ENCODE measurements at regions of chr3 and their contacts with region 1.

Region 1: GRCh38 chr3:122621112-122621511 is 43.7 kb downstream of the PARP15 start:
- DNase-seq: peak; percentile 66
- ATAC-seq: peak; percentile 63
- H3K4me3 ChIP-seq: peak overlapping the region; percentile 39; the same call in 1 of the 2 replicates
- H3K27ac ChIP-seq: peak overlapping the region; percentile 47; the same call in 1 of the 2 replicates
- H3K4me1 ChIP-seq: peaks cover 24% of the 10 kb centered on the region
- H3K27me3 ChIP-seq: no peaks in the 10 kb centered on the region
- CTCF ChIP-seq: no peak
- EP300 ChIP-seq: peak; percentile 55 to 64; a peak in 2 of 4 replicates
- POLR2A ChIP-seq: no peak
- RAD21 ChIP-seq: no peak

Region 2: GRCh38 chr3:122578069-122578740 is 42.9 kb before region 1 on chr3:
- CTCF ChIA-PET with region 1: interaction called, 47 read pairs
- POLR2A ChIA-PET with region 1: interaction called, 44 read pairs
- RAD21 ChIA-PET with region 1: interaction called, 130 read pairs
- SMC1A ChIA-PET with region 1: interaction called, 183 read pairs
- in situ Hi-C with region 1: no loop called
- intact Hi-C with region 1: loop called (anchors 1 kb)
- DNase-seq: no peak
- ATAC-seq: no peak
- H3K4me3 ChIP-seq: peak overlapping the region; percentile 54
- H3K27ac ChIP-seq: peak overlapping the region; percentile 95
- H3K4me1 ChIP-seq: peaks cover 24% of the 10 kb centered on the region
- H3K27me3 ChIP-seq: no peaks in the 10 kb centered on the region
- CTCF ChIP-seq: no peak
- EP300 ChIP-seq: no peak
- POLR2A ChIP-seq: no peak
- RAD21 ChIP-seq: no peak

Region 3: DNA sequence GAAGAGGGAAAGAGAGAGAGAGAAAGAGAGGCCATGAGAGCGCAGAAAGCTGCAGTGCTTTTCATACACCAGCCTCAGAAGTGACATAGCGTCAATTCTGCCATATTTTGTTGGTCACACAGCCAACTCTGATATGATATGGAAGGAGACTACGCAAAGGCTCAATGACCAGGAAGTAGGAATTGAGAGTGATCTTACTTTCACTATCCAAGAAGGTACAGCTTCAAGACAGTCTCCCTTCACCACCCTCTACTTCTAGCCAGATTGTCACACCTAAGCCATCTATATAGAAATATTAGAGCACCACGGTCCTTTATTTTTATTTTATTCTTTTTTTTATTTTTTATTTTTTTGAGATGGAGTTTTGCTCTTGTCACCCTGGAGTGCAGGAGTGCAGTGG is 22.6 kb before region 1 on chr3:
- CTCF ChIA-PET with region 1: interaction called, 4 read pairs
- POLR2A ChIA-PET with region 1: interaction called, 3 read pairs
- RAD21 ChIA-PET with region 1: interaction called, 7 read pairs
- SMC1A ChIA-PET with region 1: interaction called, 23 read pairs
- in situ Hi-C with region 1: no loop called
- intact Hi-C with region 1: no loop called
- DNase-seq: no peak
- ATAC-seq: peak; percentile 52
- H3K4me3 ChIP-seq: no peak overlapping the region
- H3K27ac ChIP-seq: no peak overlapping the region
- H3K4me1 ChIP-seq: 0 out of 2 replicates have a peak, but pooled peaks cover 3% of the 10 kb centered on the region
- H3K27me3 ChIP-seq: no peaks in the 10 kb centered on the region
- CTCF ChIP-seq: no peak
- EP300 ChIP-seq: no peak
- POLR2A ChIP-seq: no peak
- RAD21 ChIP-seq: no peak

Region 4: DNA sequence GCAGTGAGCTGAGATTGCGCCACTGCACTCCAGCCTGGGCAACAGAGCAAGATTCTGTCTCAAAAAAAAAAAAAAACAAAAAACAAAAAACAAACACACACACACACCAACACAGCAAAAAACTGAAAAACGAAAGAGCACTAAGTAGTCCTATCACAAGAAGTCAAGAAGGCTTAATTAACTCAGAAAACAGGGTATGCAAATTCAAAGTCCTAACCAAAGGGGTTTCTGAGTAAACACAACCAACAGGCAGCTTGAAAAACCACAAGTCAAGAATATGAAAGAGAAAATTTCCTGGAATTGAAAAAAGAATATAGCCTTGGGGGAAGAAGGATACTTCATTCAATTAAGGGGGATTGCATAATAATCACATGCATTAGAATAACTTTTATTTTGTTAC is 21.8 kb after region 1 on chr3:
- CTCF ChIA-PET with region 1: interaction called, 38 read pairs
- POLR2A ChIA-PET with region 1: interaction called, 21 read pairs
- RAD21 ChIA-PET with region 1: interaction called, 41 read pairs
- SMC1A ChIA-PET with region 1: interaction called, 68 read pairs
- in situ Hi-C with region 1: no loop called
- intact Hi-C with region 1: no loop called
- DNase-seq: peak; percentile 65
- ATAC-seq: peak; percentile 78
- H3K4me3 ChIP-seq: no peak overlapping the region
- H3K27ac ChIP-seq: no peak overlapping the region
- H3K4me1 ChIP-seq: peaks cover 22% of the 10 kb centered on the region
- H3K27me3 ChIP-seq: no peaks in the 10 kb centered on the region
- CTCF ChIP-seq: no peak
- EP300 ChIP-seq: peak; percentile 38 to 43; a peak in 2 of 4 replicates
- POLR2A ChIP-seq: no peak
- RAD21 ChIP-seq: no peak

Region 5: DNA sequence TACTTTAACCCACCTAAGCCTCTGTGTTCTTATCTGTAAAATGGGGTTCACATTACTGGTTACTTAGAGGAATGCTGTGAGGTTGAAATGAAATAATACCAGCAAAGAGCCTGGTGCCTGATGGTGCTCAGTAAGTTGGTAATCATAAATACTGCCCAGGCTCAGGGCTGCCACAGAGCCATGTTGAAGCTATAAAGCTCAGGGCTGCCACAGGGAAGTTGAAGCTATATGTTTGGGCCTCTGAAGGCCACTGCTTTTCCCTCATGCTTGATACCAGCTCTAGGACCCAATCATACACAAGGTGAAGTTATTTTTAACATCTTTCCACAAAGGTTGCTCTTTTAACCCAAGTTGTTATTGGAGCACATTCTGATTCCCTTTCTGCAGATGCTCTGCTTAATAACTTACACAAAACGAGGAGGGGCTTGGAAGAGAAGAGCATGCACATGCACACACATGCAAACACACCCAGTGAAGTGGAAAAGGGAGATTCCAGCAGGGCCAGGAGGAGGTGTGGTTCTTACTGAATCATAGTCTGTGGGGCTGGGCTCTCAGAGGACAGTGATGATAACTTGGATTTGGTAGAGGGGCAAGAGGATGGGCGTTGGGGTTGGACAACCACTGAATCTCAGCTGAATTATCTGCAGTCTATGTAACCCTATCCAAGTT is 77.0 kb after region 1 on chr3:
- CTCF ChIA-PET with region 1: no interaction called
- POLR2A ChIA-PET with region 1: interaction called, 4 read pairs
- RAD21 ChIA-PET with region 1: interaction called, 6 read pairs
- SMC1A ChIA-PET with region 1: interaction called, 15 read pairs
- in situ Hi-C with region 1: no loop called
- intact Hi-C with region 1: no loop called
- DNase-seq: peak; percentile 61
- ATAC-seq: peak; percentile 96
- H3K4me3 ChIP-seq: peak overlapping the region; percentile 7; the same call in 1 of the 2 replicates
- H3K27ac ChIP-seq: peak overlapping the region; percentile 65
- H3K4me1 ChIP-seq: peaks cover 25% of the 10 kb centered on the region
- H3K27me3 ChIP-seq: no peaks in the 10 kb centered on the region
- CTCF ChIP-seq: no peak
- EP300 ChIP-seq: no peak
- POLR2A ChIP-seq: no peak
- RAD21 ChIP-seq: no peak

Region 6: GRCh38 chr3:123143669-123144411 is 522.7 kb after region 1 on chr3:
- CTCF ChIA-PET with region 1: no interaction called
- POLR2A ChIA-PET with region 1: no interaction called
- RAD21 ChIA-PET with region 1: no interaction called
- SMC1A ChIA-PET with region 1: no interaction called
- in situ Hi-C with region 1: no loop called
- intact Hi-C with region 1: no loop called
- DNase-seq: no peak
- ATAC-seq: no peak
- H3K4me3 ChIP-seq: no peak overlapping the region
- H3K27ac ChIP-seq: no peak overlapping the region
- H3K4me1 ChIP-seq: no peaks in the 10 kb centered on the region
- H3K27me3 ChIP-seq: no peaks in the 10 kb centered on the region
- CTCF ChIP-seq: no peak
- EP300 ChIP-seq: no peak
- POLR2A ChIP-seq: no peak
- RAD21 ChIP-seq: no peak

Measured in GM12878 (cell line).